ENCODE measurements at regions of chr5 and their contacts with region 1.

Region 1: GRCh38 chr5:19608444-19609002 is 379.5 kb downstream of the CDH18 start:
- DNase-seq: no peak
- H3K4me3 ChIP-seq: no peak overlapping the region
- H3K4me3 Mint-ChIP-seq: no peak overlapping the region
- H3K27ac ChIP-seq: no peak overlapping the region
- H3K27ac Mint-ChIP-seq: no peak overlapping the region
- H3K4me1 ChIP-seq: no peaks in the 10 kb centered on the region
- H3K4me1 Mint-ChIP-seq: no peaks in the 10 kb centered on the region
- H3K27me3 ChIP-seq: no peaks in the 10 kb centered on the region
- H3K27me3 Mint-ChIP-seq: no peaks in the 10 kb centered on the region

Region 2: DNA sequence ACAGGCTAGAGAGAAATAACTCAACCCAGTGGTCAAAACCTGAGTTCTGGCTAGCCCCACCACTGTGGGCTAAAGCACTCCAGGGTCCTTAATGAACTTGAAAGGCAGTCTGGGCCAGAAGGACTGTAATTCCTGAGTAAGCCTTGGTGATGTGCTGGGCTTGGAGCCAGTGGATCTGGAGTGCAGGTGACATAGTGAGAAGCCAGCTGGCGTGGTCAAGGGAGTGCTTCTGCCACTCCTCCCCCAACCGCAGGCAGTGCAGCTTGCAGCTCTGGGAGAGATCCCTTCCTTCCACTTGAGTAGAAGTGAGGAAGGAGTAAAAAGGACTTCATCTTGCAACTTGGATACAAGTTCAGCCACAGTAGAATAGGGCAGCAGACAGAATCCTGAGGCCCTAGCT is 44.5 kb before region 1 on chr5:
- CTCF ChIA-PET with region 1: no interaction called
- POLR2A ChIA-PET with region 1: no interaction called
- intact Hi-C with region 1: loop called (anchors 1 kb)
- DNase-seq: no peak
- H3K4me3 ChIP-seq: no peak overlapping the region
- H3K4me3 Mint-ChIP-seq: no peak overlapping the region
- H3K27ac ChIP-seq: no peak overlapping the region
- H3K27ac Mint-ChIP-seq: no peak overlapping the region
- H3K4me1 ChIP-seq: no peaks in the 10 kb centered on the region
- H3K4me1 Mint-ChIP-seq: no peaks in the 10 kb centered on the region
- H3K27me3 ChIP-seq: no peaks in the 10 kb centered on the region
- H3K27me3 Mint-ChIP-seq: no peaks in the 10 kb centered on the region

Region 3: GRCh38 chr5:19655627-19656026 is 47.1 kb after region 1 on chr5:
- CTCF ChIA-PET with region 1: no interaction called
- POLR2A ChIA-PET with region 1: no interaction called
- intact Hi-C with region 1: no loop called
- DNase-seq: no peak
- H3K4me3 ChIP-seq: no peak overlapping the region
- H3K4me3 Mint-ChIP-seq: no peak overlapping the region
- H3K27ac ChIP-seq: no peak overlapping the region
- H3K27ac Mint-ChIP-seq: no peak overlapping the region
- H3K4me1 ChIP-seq: no peaks in the 10 kb centered on the region
- H3K4me1 Mint-ChIP-seq: no peaks in the 10 kb centered on the region
- H3K27me3 ChIP-seq: no peaks in the 10 kb centered on the region
- H3K27me3 Mint-ChIP-seq: no peaks in the 10 kb centered on the region

Measured in CD4-positive, alpha-beta memory T cell (primary cell).